ENCODE measurements at regions of chr14 and their contacts with region 1.

Region 1: GRCh38 chr14:50249136-50249800 is 17.9 kb upstream of the SOS2 start:
- DNase-seq: no peak
- H3K4me3 ChIP-seq: no peak overlapping the region
- H3K27ac ChIP-seq: no peak overlapping the region
- H3K4me1 ChIP-seq: no peaks in the 10 kb centered on the region
- H3K27me3 ChIP-seq: no peaks in the 10 kb centered on the region
- CTCF ChIP-seq: no peak
- EP300 ChIP-seq: no peak
- POLR2A ChIP-seq: no peak
- RAD21 ChIP-seq: no peak

Region 2: GRCh38 chr14:50260511-50260910 is 11.2 kb after region 1 on chr14:
- CTCF ChIA-PET with region 1: interaction called, 11 read pairs
- POLR2A ChIA-PET with region 1: no interaction called
- DNase-seq: no peak
- H3K4me3 ChIP-seq: no peak overlapping the region
- H3K27ac ChIP-seq: no peak overlapping the region
- H3K4me1 ChIP-seq: no peaks in the 10 kb centered on the region
- H3K27me3 ChIP-seq: no peaks in the 10 kb centered on the region
- CTCF ChIP-seq: peak in 2 of 3 experiments; percentile 36 to 53; a peak in 2 of 4 replicates
- EP300 ChIP-seq: no peak
- POLR2A ChIP-seq: no peak
- RAD21 ChIP-seq: peak; percentile 47 to 57

Measured in H1 (cell line).